Mammary epithelial cell (primary cell): ENCODE measurements at regions of chr12 and their contacts with region 1.

Region 1: GRCh38 chr12:54032627-54033100 is at the start of gene HOXC5:
- DNase-seq: peak; percentile 53
- H3K4me3 ChIP-seq: peak within 1 kb of the TSS; percentile 47 to 60 (median 54)
- H3K27ac ChIP-seq: peak within 1 kb of the TSS; percentile 33
- H3K4me1 ChIP-seq: peaks cover 30% of the 10 kb centered on the region
- H3K27me3 ChIP-seq: no peaks in the 10 kb centered on the region
- CTCF ChIP-seq: peak; percentile 94 to 95
- total RNA-seq, gene HOXC5: 0.67 to 1.4 TPM

Region 2: GRCh38 chr12:53917126-53917653 is 115.5 kb before region 1 on chr12:
- CTCF ChIA-PET with region 1: no interaction called
- dilution Hi-C with region 1: no loop called
- in situ Hi-C with region 1: no loop called
- intact Hi-C with region 1: no loop called
- DNase-seq: no peak
- H3K4me3 ChIP-seq: no peak overlapping the region
- H3K27ac ChIP-seq: no peak overlapping the region
- H3K4me1 ChIP-seq: no peaks in the 10 kb centered on the region
- H3K27me3 ChIP-seq: no peaks in the 10 kb centered on the region
- CTCF ChIP-seq: no peak

Region 3: DNA sequence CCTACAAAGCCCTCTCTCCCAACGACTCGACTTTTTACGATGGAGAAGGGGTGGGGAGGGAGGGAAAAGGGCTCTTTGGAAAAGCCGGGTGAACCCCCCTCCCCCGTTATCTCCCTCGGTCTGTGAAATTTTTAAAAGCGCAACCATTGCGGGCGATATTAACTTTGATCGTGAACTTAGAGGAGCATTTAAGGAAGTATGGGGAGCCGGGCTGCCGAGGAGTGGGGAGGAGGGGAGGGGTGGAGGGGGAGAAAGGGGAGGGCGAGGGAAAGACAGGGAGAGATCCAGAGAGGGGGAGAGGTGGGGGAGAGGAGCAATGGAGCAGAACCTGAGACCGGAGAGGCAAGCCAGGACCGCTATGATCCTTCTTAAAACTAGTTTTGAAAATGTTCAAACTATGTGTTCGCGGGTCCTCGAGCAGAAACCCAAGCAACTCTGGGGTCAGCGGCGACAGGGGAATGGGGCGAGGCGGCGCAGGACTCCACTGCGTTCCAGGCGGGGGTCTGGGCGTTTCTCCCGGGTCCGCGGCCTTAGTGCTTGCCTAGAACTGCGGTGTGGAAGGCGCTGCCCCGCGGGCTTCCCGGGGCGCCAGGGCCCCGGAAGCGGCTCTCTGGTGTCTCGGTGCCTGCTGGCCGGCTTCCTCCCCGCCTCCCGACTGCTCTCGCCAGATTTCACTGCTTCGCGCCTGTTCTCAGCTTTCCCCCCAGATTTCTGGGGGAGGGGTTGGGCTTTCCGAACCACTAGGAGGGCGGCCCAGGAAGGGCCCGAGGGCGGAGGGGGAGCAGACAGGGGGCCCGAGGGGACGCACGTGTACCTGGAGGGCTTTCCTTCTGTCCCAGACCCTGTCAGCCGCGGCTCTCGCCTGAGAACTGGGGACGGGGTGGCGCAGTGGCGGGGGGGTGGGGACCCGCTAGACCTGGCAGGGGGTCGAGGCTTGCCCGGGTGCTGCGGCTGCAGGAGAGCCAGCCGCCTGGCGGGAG is 58.3 kb before region 1 on chr12 and contains the start of gene HOTAIR:
- CTCF ChIA-PET with region 1: no interaction called
- dilution Hi-C with region 1: no loop called
- in situ Hi-C with region 1: no loop called
- intact Hi-C with region 1: no loop called
- DNase-seq: peak; percentile 56
- H3K4me3 ChIP-seq: peak within 1 kb of the TSS; percentile 42 to 51 (median 46)
- H3K27ac ChIP-seq: peak within 1 kb of the TSS; percentile 19
- H3K4me1 ChIP-seq: peaks cover 25% of the 10 kb centered on the region
- H3K27me3 ChIP-seq: peaks cover 8% of the 10 kb centered on the region
- CTCF ChIP-seq: no peak
- total RNA-seq, gene HOTAIR: 0.67 TPM in 1 of 2 donors, not detected in the other

Region 4: DNA sequence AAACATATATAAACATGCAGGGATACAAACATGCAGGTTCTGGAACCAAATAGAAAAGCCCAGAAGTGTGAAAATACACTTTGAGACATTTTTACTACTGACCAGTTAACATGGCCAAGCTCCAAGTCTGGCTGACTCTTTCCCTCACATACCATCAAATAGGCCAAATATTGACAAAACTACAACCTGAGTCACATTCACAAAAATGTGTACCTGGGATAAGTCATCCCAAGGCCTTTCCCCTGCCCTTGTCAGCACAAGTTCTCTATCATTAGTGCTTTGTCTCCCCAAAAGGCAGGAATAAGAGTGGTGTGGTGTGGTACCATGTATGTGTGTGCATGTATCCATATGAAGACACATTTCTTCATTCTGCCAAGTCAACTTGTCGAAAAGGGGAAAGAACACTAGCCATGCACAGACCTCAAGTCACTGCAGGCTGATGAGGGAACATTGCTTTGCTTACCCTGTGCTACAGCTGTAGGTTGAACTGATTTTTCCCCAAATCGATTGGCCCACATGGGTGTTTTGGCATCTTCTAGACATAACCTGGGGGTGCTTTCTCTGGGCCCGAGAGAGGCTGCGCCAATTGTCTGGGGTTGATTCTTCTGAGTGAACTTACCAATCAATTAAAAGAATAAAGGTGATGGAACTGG is 35.9 kb after region 1 on chr12:
- CTCF ChIA-PET with region 1: no interaction called
- dilution Hi-C with region 1: no loop called
- in situ Hi-C with region 1: no loop called
- intact Hi-C with region 1: loop called (anchors 2 kb)
- DNase-seq: peak; percentile 70
- H3K4me3 ChIP-seq: no peak overlapping the region
- H3K27ac ChIP-seq: no peak overlapping the region
- H3K4me1 ChIP-seq: peaks cover 17% of the 10 kb centered on the region
- H3K27me3 ChIP-seq: no peaks in the 10 kb centered on the region
- CTCF ChIP-seq: no peak

Region 5: DNA sequence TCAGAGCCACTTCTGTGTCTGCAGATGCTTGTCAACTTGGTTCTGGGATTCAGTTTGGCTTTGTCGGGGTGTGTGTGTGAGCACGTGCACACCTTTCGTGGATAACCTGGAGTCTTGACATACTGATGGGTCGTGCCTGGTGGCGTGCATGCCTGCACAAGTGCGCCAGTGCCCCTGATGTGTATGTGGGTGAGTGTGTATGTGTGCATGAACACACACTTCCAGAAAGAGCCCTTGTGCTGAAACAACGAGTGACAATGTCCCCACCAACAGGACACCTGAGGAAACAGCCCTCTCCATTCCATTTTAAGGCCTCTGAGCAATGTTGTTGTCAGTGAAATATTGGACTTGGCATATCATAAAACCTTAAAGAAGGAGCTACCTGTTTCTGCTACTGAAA is 102.2 kb after region 1 on chr12:
- CTCF ChIA-PET with region 1: no interaction called
- dilution Hi-C with region 1: no loop called
- in situ Hi-C with region 1: no loop called
- intact Hi-C with region 1: loop called (anchors 1 kb)
- DNase-seq: no peak
- H3K4me3 ChIP-seq: no peak overlapping the region
- H3K27ac ChIP-seq: no peak overlapping the region
- H3K4me1 ChIP-seq: no peaks in the 10 kb centered on the region
- H3K27me3 ChIP-seq: no peaks in the 10 kb centered on the region
- CTCF ChIP-seq: peak in 1 of 2 donors; percentile 19

Region 6: GRCh38 chr12:54201001-54201794 is 168.5 kb after region 1 on chr12:
- CTCF ChIA-PET with region 1: interaction called, 10 read pairs
- dilution Hi-C with region 1: no loop called
- in situ Hi-C with region 1: no loop called
- intact Hi-C with region 1: loop called (anchors 1 kb)
- DNase-seq: peak; percentile 43
- H3K4me3 ChIP-seq: no peak overlapping the region
- H3K27ac ChIP-seq: no peak overlapping the region
- H3K4me1 ChIP-seq: peaks cover 4% of the 10 kb centered on the region
- H3K27me3 ChIP-seq: no peaks in the 10 kb centered on the region
- CTCF ChIP-seq: peak; percentile 95 to 99

Region 7: DNA sequence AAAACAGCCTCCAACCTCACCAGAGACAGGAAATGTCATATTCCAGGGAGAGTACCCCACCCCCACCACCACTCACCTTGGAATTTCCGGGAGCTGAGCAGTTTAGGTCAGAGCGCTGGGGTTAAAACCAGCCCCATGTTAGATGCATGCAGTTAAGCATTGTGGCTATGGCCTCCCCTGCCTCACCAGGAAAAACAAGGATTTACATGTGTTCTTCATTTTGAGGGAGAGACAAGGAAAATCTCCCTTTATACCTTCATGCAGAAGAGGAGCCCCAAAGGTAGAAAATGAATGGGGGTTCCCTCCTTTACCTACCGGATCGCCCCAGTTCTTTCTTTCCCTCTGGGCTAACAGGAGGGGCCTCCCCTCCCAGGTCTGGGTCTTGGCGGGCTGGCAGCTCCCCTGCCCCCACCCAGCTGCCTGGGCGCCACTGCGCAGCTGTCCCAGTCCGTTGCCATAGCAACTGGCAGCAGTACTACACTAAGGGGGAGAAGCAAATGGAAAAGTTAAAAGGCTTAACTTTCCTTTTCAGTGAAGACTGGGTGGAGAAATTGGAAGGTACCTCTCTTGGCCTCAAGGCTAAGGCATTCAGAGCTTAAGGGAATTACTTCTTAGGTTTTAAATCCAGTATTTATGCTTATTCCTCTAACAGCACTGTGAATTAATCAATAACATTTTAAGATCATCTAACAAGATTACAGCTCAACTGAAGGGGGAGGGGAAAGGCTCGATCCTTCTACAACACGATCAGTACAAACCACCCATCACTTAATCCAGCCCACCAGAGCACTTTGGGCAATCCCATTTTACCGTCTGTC is 226.7 kb after region 1 on chr12:
- CTCF ChIA-PET with region 1: interaction called, 22 read pairs
- dilution Hi-C with region 1: no loop called
- in situ Hi-C with region 1: no loop called
- intact Hi-C with region 1: no loop called
- DNase-seq: peak; percentile 77
- H3K4me3 ChIP-seq: peak overlapping the region; percentile 6 to 39 (median 33)
- H3K27ac ChIP-seq: peak overlapping the region; percentile 91
- H3K4me1 ChIP-seq: peaks cover 36% of the 10 kb centered on the region
- H3K27me3 ChIP-seq: no peaks in the 10 kb centered on the region
- CTCF ChIP-seq: no peak